ENCODE measurements at regions of chr1 and their contacts with region 1.

Region 1: GRCh38 chr1:53238197-53239155 is at the start of gene MAGOH:
- DNase-seq: peak; percentile 91
- H3K4me3 ChIP-seq: peak within 1 kb of the TSS; percentile 85 to 94 (median 89)
- H3K27ac ChIP-seq: peak within 1 kb of the TSS; percentile 84
- H3K4me1 ChIP-seq: peaks cover 12% of the 10 kb centered on the region
- H3K27me3 ChIP-seq: no peaks in the 10 kb centered on the region
- CTCF ChIP-seq: no peak
- total RNA-seq, gene MAGOH: 15.8 to 43.8 TPM

Region 2: GRCh38 chr1:53011175-53011574 is 227.3 kb before region 1 on chr1:
- CTCF ChIA-PET with region 1: no interaction called
- dilution Hi-C with region 1: no loop called
- in situ Hi-C with region 1: no loop called
- intact Hi-C with region 1: no loop called
- DNase-seq: no peak
- H3K4me3 ChIP-seq: no peak overlapping the region
- H3K27ac ChIP-seq: no peak overlapping the region
- H3K4me1 ChIP-seq: no peaks in the 10 kb centered on the region
- H3K27me3 ChIP-seq: no peaks in the 10 kb centered on the region
- CTCF ChIP-seq: no peak

Region 3: GRCh38 chr1:53220171-53220961 is 18.1 kb before region 1 on chr1 and contains the start of gene CZIB:
- CTCF ChIA-PET with region 1: no interaction called
- dilution Hi-C with region 1: no loop called
- in situ Hi-C with region 1: no loop called
- intact Hi-C with region 1: loop called (anchors 1 kb)
- DNase-seq: peak; percentile 94
- H3K4me3 ChIP-seq: peak within 1 kb of the TSS; percentile 79 to 99 (median 96)
- H3K27ac ChIP-seq: peak within 1 kb of the TSS; percentile 77
- H3K4me1 ChIP-seq: peaks cover 12% of the 10 kb centered on the region
- H3K27me3 ChIP-seq: no peaks in the 10 kb centered on the region
- CTCF ChIP-seq: no peak
- total RNA-seq, gene CZIB: 24.8 to 30.2 TPM

Region 4: GRCh38 chr1:53249706-53250105 is 11.2 kb after region 1 on chr1:
- CTCF ChIA-PET with region 1: no interaction called
- dilution Hi-C with region 1: no loop called
- in situ Hi-C with region 1: no loop called
- intact Hi-C with region 1: loop called (anchors 1 kb)
- DNase-seq: no peak
- H3K4me3 ChIP-seq: no peak overlapping the region
- H3K27ac ChIP-seq: no peak overlapping the region
- H3K4me1 ChIP-seq: no peaks in the 10 kb centered on the region
- H3K27me3 ChIP-seq: no peaks in the 10 kb centered on the region
- CTCF ChIP-seq: no peak

Region 5: GRCh38 chr1:53294567-53294966 is 56.1 kb after region 1 on chr1:
- CTCF ChIA-PET with region 1: no interaction called
- dilution Hi-C with region 1: loop called (anchors 10 kb)
- in situ Hi-C with region 1: no loop called
- intact Hi-C with region 1: no loop called
- DNase-seq: peak; percentile 67
- H3K4me3 ChIP-seq: no peak overlapping the region
- H3K27ac ChIP-seq: no peak overlapping the region
- H3K4me1 ChIP-seq: peaks cover 36% of the 10 kb centered on the region
- H3K27me3 ChIP-seq: no peaks in the 10 kb centered on the region
- CTCF ChIP-seq: no peak

Region 6: GRCh38 chr1:53697721-53698383 is 459.4 kb after region 1 on chr1:
- CTCF ChIA-PET with region 1: no interaction called
- dilution Hi-C with region 1: no loop called
- in situ Hi-C with region 1: no loop called
- intact Hi-C with region 1: no loop called
- DNase-seq: no peak
- H3K4me3 ChIP-seq: no peak overlapping the region
- H3K27ac ChIP-seq: no peak overlapping the region
- H3K4me1 ChIP-seq: no peaks in the 10 kb centered on the region
- H3K27me3 ChIP-seq: no peaks in the 10 kb centered on the region
- CTCF ChIP-seq: no peak

Measured in mammary epithelial cell (primary cell).